ENCODE measurements at regions of chr12 and their contacts with region 1.

Region 1: DNA sequence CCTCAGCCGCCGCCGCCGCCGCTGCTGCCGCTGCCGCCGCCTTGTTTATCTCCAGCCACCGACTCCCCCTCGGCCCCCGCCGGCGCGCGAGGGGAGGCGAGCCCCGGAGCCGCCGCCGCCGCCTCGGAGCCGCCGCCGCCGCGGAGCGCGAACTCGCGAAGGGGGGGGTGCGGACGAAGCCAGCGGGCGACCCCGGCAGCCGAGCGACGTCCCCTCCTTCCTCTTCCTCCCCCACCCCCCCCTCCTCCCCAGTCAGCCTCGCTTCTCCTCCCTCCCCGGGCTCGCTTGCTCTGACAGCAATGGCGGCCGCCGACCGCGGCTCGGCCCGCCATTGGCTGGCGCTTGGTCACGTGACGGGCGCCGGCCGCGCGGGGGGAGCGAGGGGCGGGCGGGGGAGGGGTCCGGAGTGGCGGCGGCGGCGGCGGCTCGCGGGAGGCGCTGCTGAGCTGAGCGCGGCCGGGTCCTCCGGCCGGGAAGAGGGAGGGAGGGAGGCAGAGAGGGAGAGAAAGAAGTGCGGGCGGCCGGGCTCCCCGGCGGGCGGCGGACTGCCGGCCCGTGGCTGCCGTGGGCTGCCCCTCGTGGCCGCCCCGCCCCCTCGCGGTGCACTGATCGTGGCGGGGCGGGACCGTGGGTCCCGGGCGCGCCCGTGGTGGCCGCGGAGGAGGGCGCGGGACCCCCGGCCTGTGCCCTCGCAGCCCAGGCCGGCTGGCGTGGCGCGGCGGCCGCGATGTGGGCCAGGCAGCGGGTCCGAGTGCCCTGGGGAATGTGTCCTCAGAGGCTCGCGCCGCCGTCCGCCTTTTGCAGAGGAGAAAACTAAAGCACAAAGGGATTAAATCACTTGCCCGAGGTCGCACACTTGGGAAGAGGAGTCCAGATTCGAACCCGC is at the start of gene MED13L:
- DNase-seq: peak; percentile 96
- total RNA-seq, gene MED13L: 74.5 TPM

Region 2: DNA sequence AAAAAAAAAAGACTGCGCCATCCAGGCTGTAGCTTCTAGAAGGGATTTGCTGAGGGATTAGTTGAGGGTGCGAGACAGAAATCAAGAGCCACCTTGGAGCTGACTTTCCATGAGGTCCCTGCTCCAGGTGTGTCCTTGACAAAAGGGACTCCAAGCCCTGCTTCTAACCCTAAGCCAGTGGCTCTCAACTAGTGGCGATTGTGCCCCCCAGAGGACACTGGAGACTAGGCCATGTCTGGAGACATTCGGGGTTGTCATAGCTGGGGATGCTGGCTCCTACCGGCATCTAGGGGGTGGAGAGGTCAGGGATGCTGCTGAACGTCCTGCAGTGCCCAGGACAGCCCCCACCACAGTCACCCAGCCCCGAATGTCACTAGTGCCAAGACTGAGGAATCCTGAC is 419.7 kb after region 1 on chr12:
- intact Hi-C with region 1: loop called (anchors 10 kb)
- DNase-seq: no peak

Measured in cardiac septum (tissue), 1 donor.